ENCODE measurements at regions of chr3 and their contacts with region 1.

Region 1: GRCh38 chr3:140736863-140737460 is 59.1 kb downstream of the TRIM42 start:
- DNase-seq: peak; percentile 59 to 71
- H3K4me3 ChIP-seq: no peak overlapping the region
- H3K4me3 Mint-ChIP-seq: no peak overlapping the region
- H3K27ac Mint-ChIP-seq: no peak overlapping the region
- H3K4me1 ChIP-seq: no peaks in the 10 kb centered on the region
- H3K4me1 Mint-ChIP-seq: peaks cover 7% of the 10 kb centered on the region
- H3K27me3 ChIP-seq: no peaks in the 10 kb centered on the region
- H3K27me3 Mint-ChIP-seq: no peaks in the 10 kb centered on the region
- CTCF ChIP-seq: peak; percentile 63 to 68

Region 2: GRCh38 chr3:140276703-140277102 is 460.3 kb before region 1 on chr3:
- CTCF ChIA-PET with region 1: no interaction called
- POLR2A ChIA-PET with region 1: no interaction called
- intact Hi-C with region 1: loop called (anchors 1 kb)
- DNase-seq: peak in 1 of 2 experiments; percentile 19
- H3K4me3 ChIP-seq: no peak overlapping the region
- H3K4me3 Mint-ChIP-seq: no peak overlapping the region
- H3K27ac Mint-ChIP-seq: no peak overlapping the region
- H3K4me1 ChIP-seq: no peaks in the 10 kb centered on the region
- H3K4me1 Mint-ChIP-seq: no peaks in the 10 kb centered on the region
- H3K27me3 ChIP-seq: no peaks in the 10 kb centered on the region
- H3K27me3 Mint-ChIP-seq: peaks cover 10% of the 10 kb centered on the region
- CTCF ChIP-seq: peak in 1 of 2 experiments; percentile 65

Region 3: DNA sequence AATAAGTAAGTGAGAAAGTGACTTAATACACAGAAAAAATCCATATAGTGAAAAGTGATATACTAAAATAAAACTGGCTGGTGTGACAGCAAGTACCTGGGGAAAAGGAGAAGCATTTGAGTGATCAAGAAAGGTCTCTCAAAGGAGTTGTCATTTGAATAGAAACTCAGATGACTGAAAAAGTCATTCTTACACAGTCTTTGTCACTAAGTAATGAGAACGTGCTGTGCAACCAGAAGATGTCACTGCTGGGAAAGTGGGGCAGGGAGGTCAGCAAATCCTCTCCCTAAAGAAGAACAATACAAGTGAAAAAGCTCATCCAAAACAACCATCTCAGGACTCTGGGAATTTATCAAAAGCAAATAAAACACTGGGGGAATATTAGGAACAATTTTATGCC is 376.6 kb before region 1 on chr3:
- CTCF ChIA-PET with region 1: no interaction called
- POLR2A ChIA-PET with region 1: no interaction called
- intact Hi-C with region 1: loop called (anchors 2 kb)
- DNase-seq: no peak
- H3K4me3 ChIP-seq: no peak overlapping the region
- H3K4me3 Mint-ChIP-seq: no peak overlapping the region
- H3K27ac Mint-ChIP-seq: no peak overlapping the region
- H3K4me1 ChIP-seq: no peaks in the 10 kb centered on the region
- H3K4me1 Mint-ChIP-seq: no peaks in the 10 kb centered on the region
- H3K27me3 ChIP-seq: no peaks in the 10 kb centered on the region
- H3K27me3 Mint-ChIP-seq: no peaks in the 10 kb centered on the region
- CTCF ChIP-seq: peak in 1 of 2 experiments; percentile 15

Region 4: GRCh38 chr3:140552898-140553297 is 184.1 kb before region 1 on chr3:
- CTCF ChIA-PET with region 1: no interaction called
- POLR2A ChIA-PET with region 1: no interaction called
- intact Hi-C with region 1: loop called (anchors 5 kb)
- DNase-seq: no peak
- H3K4me3 ChIP-seq: no peak overlapping the region
- H3K4me3 Mint-ChIP-seq: no peak overlapping the region
- H3K27ac Mint-ChIP-seq: no peak overlapping the region
- H3K4me1 ChIP-seq: no peaks in the 10 kb centered on the region; the same call in 1 of the 2 replicates
- H3K4me1 Mint-ChIP-seq: no peaks in the 10 kb centered on the region
- H3K27me3 ChIP-seq: no peaks in the 10 kb centered on the region
- H3K27me3 Mint-ChIP-seq: no peaks in the 10 kb centered on the region
- CTCF ChIP-seq: no peak

Region 5: GRCh38 chr3:140636406-140637130 is 100.4 kb before region 1 on chr3:
- CTCF ChIA-PET with region 1: interaction called, 3 read pairs
- POLR2A ChIA-PET with region 1: no interaction called
- intact Hi-C with region 1: loop called (anchors 5 kb)
- DNase-seq: no peak
- H3K4me3 ChIP-seq: no peak overlapping the region
- H3K4me3 Mint-ChIP-seq: no peak overlapping the region
- H3K27ac Mint-ChIP-seq: no peak overlapping the region
- H3K4me1 ChIP-seq: peaks cover 23% of the 10 kb centered on the region
- H3K4me1 Mint-ChIP-seq: peaks cover 29% of the 10 kb centered on the region
- H3K27me3 ChIP-seq: no peaks in the 10 kb centered on the region
- H3K27me3 Mint-ChIP-seq: no peaks in the 10 kb centered on the region
- CTCF ChIP-seq: no peak